WTC11 (cell line): ENCODE measurements at regions of chr11 and their contacts with region 1.

Region 1: GRCh38 chr11:76919887-76920746 is 59.4 kb downstream of the ACER3 start:
- DNase-seq: peak; percentile 48
- ATAC-seq: peak; percentile 85
- H3K4me3 Mint-ChIP-seq: no peak overlapping the region
- H3K27ac Mint-ChIP-seq: no peak overlapping the region
- H3K4me1 Mint-ChIP-seq: peaks cover 14% of the 10 kb centered on the region
- H3K27me3 Mint-ChIP-seq: no peaks in the 10 kb centered on the region
- CTCF ChIP-seq: peak; percentile 78

Region 2: GRCh38 chr11:76721755-76722677 is 198.1 kb before region 1 on chr11:
- CTCF ChIA-PET with region 1: interaction called, 76 read pairs
- POLR2A ChIA-PET with region 1: no interaction called
- DNase-seq: peak; percentile 88
- ATAC-seq: peak; percentile 94
- H3K4me3 Mint-ChIP-seq: peak overlapping the region; percentile 39
- H3K27ac Mint-ChIP-seq: no peak overlapping the region
- H3K4me1 Mint-ChIP-seq: peaks cover 5% of the 10 kb centered on the region
- H3K27me3 Mint-ChIP-seq: peaks cover 22% of the 10 kb centered on the region
- CTCF ChIP-seq: peak; percentile 79

Region 3: DNA sequence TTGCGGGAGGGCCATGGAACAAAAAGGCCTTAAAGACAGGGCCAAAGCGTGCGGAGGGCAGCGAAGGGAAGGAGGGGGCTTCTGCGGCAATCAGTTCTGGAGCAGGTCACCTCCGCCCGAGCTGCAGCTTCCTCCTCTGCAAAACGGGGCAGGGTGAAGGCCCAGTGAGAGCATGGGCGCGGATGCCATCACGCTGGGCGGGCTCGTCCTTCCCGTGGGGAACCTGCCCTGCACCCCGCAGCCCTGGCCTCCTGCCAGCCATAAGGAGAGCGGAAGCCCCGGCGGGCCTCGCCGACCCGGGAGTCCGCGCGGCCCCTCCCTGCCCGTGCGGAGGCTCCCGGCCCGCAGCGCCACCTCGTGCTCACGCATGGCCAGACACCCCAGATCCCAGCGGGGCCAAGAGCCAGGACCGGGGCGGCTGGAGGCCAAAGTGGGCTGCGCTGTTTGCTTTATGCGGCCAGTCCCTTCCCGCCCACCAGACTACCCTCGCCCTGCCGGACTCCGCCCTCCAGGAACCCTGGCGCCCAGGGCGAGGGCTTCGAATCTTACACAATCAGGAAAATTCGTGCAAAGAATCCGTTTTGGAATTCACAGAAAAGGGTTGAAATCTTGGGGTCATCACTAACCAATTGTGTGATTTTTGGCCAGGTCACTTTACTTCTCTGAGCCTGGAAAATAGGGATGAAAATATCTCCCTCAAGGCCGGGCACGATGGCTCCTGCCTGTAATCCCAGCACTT is 120.9 kb before region 1 on chr11:
- CTCF ChIA-PET with region 1: interaction called, 14 read pairs
- POLR2A ChIA-PET with region 1: no interaction called
- DNase-seq: peak; percentile 92
- ATAC-seq: peak; percentile 90
- H3K4me3 Mint-ChIP-seq: peak overlapping the region; percentile 55
- H3K27ac Mint-ChIP-seq: no peak overlapping the region
- H3K4me1 Mint-ChIP-seq: peaks cover 18% of the 10 kb centered on the region
- H3K27me3 Mint-ChIP-seq: no peaks in the 10 kb centered on the region
- CTCF ChIP-seq: peak; percentile 84

Region 4: DNA sequence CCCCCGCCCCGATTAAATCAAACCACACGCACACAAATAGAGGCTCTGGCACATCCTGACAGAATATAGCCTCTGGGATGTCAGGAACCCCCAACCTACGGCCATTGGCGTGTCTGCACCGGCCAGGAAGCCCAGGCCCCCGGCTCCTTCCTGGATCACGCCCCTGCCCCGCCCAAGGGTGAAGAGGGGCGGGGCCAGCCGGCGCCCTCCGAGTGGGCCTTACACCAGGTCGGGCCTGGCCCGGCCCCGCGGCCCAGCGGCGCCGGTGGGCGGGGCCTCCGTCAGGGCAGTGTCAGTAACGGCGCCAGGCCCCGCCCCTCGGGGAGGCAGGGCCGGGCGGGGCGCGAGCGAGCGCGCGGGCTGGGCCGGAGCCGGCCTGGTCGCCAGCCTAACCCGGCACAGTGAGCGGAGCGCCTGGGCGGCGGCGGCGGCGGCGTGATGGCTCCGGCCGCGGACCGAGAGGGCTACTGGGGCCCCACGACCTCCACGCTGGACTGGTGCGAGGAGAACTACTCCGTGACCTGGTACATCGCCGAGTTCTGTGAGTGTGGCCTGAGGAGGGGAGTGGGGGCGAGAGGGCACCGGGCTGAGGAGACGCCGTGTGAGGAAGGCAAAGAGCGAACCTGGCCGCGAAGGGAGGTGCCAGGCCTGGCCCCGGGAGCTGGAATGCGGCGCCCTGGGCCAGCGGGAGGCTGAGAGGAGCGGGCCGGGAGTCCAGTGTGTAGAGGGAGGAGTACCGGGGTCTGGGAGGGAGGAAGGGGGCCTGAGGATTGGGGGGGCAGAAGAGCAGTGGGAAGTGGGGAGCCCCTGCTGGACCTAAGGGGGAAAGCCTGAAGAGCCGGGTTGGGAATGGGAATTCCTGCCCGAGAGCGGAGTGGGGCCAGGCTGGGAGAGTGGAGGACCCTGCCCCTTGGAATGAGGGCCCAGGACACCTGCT is 59.3 kb before region 1 on chr11 and contains the start of gene ACER3:
- CTCF ChIA-PET with region 1: interaction called, 41 read pairs
- POLR2A ChIA-PET with region 1: no interaction called
- DNase-seq: peak; percentile 92
- ATAC-seq: peak; percentile 96
- H3K4me3 Mint-ChIP-seq: peak within 1 kb of the TSS; percentile 77
- H3K27ac Mint-ChIP-seq: peak within 1 kb of the TSS; percentile 63
- H3K4me1 Mint-ChIP-seq: peaks cover 21% of the 10 kb centered on the region
- H3K27me3 Mint-ChIP-seq: no peaks in the 10 kb centered on the region
- CTCF ChIP-seq: no peak
- total RNA-seq, gene ACER3: 12.3 to 13.7 TPM (median 12.8 TPM) in 3 replicates

Region 5: GRCh38 chr11:76978818-76979217 is 58.7 kb after region 1 on chr11:
- CTCF ChIA-PET with region 1: interaction called, 20 read pairs
- POLR2A ChIA-PET with region 1: no interaction called
- DNase-seq: no peak
- ATAC-seq: no peak
- H3K4me3 Mint-ChIP-seq: no peak overlapping the region
- H3K27ac Mint-ChIP-seq: no peak overlapping the region
- H3K4me1 Mint-ChIP-seq: no peaks in the 10 kb centered on the region
- H3K27me3 Mint-ChIP-seq: no peaks in the 10 kb centered on the region
- CTCF ChIP-seq: no peak

Region 6: DNA sequence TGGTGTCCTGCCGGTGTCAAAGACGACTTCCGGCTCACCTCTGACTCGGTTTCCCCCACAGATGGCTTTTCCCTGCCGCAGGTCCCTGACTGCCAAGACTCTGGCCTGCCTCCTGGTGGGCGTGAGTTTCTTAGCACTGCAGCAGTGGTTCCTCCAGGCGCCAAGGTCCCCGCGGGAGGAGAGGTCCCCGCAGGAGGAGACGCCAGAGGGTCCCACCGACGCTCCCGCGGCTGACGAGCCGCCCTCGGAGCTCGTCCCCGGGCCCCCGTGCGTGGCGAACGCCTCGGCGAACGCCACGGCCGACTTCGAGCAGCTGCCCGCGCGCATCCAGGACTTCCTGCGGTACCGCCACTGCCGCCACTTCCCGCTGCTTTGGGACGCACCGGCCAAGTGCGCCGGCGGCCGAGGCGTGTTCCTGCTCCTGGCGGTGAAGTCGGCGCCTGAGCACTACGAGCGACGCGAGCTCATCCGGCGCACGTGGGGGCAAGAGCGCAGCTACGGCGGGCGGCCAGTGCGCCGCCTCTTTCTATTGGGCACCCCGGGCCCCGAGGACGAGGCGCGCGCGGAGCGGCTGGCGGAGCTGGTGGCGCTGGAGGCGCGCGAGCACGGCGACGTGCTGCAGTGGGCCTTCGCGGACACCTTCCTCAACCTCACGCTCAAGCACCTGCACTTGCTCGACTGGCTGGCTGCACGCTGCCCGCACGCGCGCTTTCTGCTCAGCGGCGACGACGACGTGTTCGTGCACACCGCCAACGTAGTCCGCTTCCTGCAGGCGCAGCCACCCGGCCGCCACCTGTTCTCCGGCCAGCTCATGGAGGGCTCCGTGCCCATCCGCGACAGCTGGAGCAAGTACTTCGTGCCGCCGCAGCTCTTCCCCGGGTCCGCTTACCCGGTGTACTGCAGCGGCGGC is 119.6 kb after region 1 on chr11:
- CTCF ChIA-PET with region 1: interaction called, 86 read pairs
- POLR2A ChIA-PET with region 1: no interaction called
- DNase-seq: peak; percentile 71
- ATAC-seq: peak; percentile 68
- H3K4me3 Mint-ChIP-seq: peak overlapping the region; percentile 44
- H3K27ac Mint-ChIP-seq: no peak overlapping the region
- H3K4me1 Mint-ChIP-seq: peaks cover 7% of the 10 kb centered on the region
- H3K27me3 Mint-ChIP-seq: peaks cover 52% of the 10 kb centered on the region
- CTCF ChIP-seq: peak; percentile 52; the same call in 1 of the 2 replicates